Activated T-helper 1 cell treated with anti-CD3 and anti-CD28 coated beads, Interleukin-12 subunit alpha, Interleukin-12 subunit beta, Interleukin-2, Interleukin-4 antibody, amounts not matched to agents 30 ng/mL and 10 ng/mL and 1 ng/mL, durations not matched to agents 14 hours and 24 hours and 36 hours (primary cell): ENCODE measurements at regions of chr17 and their contacts with region 1.

Region 1: GRCh38 chr17:39927101-39927928 is at the starts of genes LRRC3C and ORMDL3:
- DNase-seq: peak; percentile 91
- H3K4me3 Mint-ChIP-seq: peak within 1 kb of the TSS; percentile 97
- H3K27ac Mint-ChIP-seq: peak within 1 kb of the TSS; percentile 92
- H3K4me1 Mint-ChIP-seq: peaks cover 60% of the 10 kb centered on the region
- H3K27me3 Mint-ChIP-seq: no peaks in the 10 kb centered on the region
- total RNA-seq, gene LRRC3C: not detected in 2 replicates
- total RNA-seq, gene ORMDL3: 70.8 and 77.4 TPM in 2 replicates

Region 2: GRCh38 chr17:39636927-39637736 is 290.2 kb before region 1 on chr17 and contains the start of gene STARD3:
- intact Hi-C with region 1: loop called (anchors 1 kb)
- DNase-seq: peak; percentile 88
- H3K4me3 Mint-ChIP-seq: peak within 1 kb of the TSS; percentile 94
- H3K27ac Mint-ChIP-seq: peak within 1 kb of the TSS; percentile 85
- H3K4me1 Mint-ChIP-seq: peaks cover 34% of the 10 kb centered on the region
- H3K27me3 Mint-ChIP-seq: peaks cover 2% of the 10 kb centered on the region
- total RNA-seq, gene STARD3: 54.7 and 65.3 TPM in 2 replicates

Region 3: DNA sequence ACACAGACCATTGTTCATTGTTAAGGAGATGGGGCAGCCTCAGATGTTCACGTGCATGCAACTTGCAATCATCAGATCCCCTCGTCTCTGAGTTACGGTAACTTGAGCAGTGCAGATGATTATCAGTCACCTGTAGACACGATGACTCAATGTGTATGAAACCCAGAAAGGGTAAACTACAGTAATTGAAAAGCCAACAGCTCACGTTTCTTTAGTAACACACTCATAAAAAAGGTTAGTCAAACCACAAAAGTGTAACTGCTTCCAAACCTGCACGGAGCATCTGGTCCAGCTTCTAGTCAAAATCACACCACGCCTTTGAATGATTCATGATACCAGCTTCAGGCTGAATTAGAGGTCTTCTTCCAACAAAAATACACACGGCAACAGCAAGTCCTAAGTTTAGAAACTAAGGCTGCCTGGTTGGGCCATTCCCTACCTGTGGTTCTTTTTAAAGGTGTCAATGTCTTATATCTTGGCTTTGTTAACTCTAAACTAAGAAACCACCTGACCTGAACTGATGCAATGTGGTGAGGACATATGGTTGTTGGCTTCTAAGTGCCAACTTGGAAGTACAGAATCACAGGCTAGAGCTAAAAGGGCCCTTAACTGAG is 157.2 kb before region 1 on chr17:
- intact Hi-C with region 1: loop called (anchors 5 kb)
- DNase-seq: peak; percentile 63
- H3K4me3 Mint-ChIP-seq: peak overlapping the region; percentile 38
- H3K27ac Mint-ChIP-seq: peak overlapping the region; percentile 56
- H3K4me1 Mint-ChIP-seq: peaks cover 93% of the 10 kb centered on the region
- H3K27me3 Mint-ChIP-seq: no peaks in the 10 kb centered on the region

Region 4: GRCh38 chr17:39903158-39903884 is 24.0 kb before region 1 on chr17:
- intact Hi-C with region 1: loop called (anchors 1 kb)
- DNase-seq: peak; percentile 40
- H3K4me3 Mint-ChIP-seq: peak overlapping the region; percentile 62
- H3K27ac Mint-ChIP-seq: peak overlapping the region; percentile 55
- H3K4me1 Mint-ChIP-seq: peaks cover 49% of the 10 kb centered on the region
- H3K27me3 Mint-ChIP-seq: no peaks in the 10 kb centered on the region

Region 5: GRCh38 chr17:39952680-39953470 is 25.6 kb after region 1 on chr17:
- intact Hi-C with region 1: loop called (anchors 1 kb)
- DNase-seq: peak; percentile 79
- H3K4me3 Mint-ChIP-seq: peak overlapping the region; percentile 79
- H3K27ac Mint-ChIP-seq: peak overlapping the region; percentile 77
- H3K4me1 Mint-ChIP-seq: peaks cover 38% of the 10 kb centered on the region
- H3K27me3 Mint-ChIP-seq: peaks cover 3% of the 10 kb centered on the region

Region 6: DNA sequence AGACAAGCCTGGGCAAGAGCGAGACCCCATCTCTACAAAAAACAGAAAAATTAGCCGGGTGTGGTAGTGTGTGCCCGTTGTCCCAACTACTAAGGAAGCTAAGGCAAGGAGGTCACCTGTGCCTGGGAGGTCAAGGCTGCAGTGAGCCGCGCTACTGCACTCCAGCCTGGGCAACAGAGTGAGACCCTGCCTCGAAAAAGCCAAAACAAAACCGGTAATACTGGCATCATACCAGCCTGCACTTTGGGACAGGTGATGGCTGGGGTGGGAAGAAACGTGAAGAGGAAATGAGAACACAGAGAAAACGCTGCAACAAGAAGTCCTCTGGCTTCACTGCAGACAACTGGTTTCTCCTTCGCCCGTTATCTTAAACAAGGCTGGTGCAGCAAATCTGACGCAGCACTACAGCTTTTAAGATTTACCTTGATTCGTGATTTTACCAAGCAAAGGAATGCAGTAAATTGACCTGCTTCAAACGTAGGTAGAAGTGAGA is 212.3 kb after region 1 on chr17:
- intact Hi-C with region 1: loop called (anchors 2 kb)
- DNase-seq: no peak
- H3K4me3 Mint-ChIP-seq: peak overlapping the region; percentile 98
- H3K27ac Mint-ChIP-seq: peak overlapping the region; percentile 98
- H3K4me1 Mint-ChIP-seq: peaks cover 34% of the 10 kb centered on the region
- H3K27me3 Mint-ChIP-seq: peaks cover 2% of the 10 kb centered on the region